ENCODE measurements at regions of chr4 and their contacts with region 1.

Region 1: GRCh38 chr4:4875147-4875546 is 15.7 kb downstream of the MSX1 start:
- DNase-seq: no peak

Region 2: DNA sequence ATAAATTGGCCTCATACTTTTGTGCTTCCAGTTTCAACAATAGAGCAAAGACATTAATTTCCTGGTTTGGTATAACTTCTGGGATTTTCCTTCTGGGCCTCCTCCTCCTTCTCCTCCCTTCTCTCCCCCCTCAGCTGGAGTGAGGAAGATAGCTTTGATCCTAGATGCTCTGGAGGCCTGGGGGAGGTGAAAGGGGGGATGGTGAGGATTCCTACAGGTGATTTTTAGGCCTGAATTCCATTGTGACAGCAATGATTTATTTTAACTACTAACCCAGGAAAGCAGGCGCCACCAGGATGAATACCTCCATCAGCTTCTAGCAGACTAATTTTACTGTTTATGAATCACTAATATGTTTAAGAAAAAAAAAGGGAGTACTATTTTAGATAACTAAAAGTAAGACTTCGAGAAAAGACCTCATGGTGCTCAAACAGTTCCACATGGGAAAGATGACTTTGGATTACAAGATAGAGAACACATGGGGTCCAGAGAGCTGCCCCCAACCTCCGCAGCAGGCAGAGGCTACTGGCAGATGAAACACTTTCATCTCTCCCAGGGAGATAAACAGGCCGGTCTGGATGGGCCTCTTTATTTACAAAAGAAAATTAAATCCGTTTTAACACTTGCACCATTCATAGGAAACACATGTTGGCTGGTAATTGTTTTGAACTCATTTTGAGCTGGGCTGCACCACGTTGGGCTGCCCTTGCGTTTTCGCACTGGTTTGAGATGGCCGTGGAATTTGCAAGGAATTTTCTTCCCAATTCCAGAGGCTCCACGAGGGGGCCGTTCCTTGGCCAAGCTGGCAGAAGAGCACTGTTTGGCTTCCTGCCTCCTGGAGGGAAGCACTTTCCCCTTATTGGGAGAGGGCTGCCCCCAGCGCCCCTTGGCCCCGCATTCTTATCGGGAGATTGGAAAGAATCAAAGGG is 208.2 kb before region 1 on chr4:
- in situ Hi-C with region 1: loop called (anchors 5 kb)
- DNase-seq: peak; percentile 74

Region 3: DNA sequence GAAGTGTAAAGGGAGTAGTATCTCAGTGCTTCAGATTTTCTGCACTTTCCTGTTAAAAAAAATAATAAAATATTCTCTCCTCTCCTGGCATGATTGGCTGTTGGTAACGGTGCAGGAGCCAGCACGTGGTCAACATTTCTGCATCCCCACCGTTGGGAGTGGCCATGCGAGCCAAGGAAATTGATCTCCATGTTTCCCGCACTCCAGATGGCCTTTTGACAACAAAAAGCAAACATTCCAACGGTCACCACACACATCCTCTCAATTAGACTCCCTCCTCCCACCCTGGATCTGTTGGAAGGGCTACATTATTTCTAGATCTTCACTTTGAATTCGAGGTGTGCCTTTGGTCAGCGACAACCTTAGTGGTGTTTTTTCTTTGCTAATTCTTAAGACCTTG is 221.1 kb after region 1 on chr4:
- in situ Hi-C with region 1: no loop called
- DNase-seq: no peak

Measured in G401 (cell line).